ENCODE measurements at regions of chr9 and their contacts with region 1.

Region 1: DNA sequence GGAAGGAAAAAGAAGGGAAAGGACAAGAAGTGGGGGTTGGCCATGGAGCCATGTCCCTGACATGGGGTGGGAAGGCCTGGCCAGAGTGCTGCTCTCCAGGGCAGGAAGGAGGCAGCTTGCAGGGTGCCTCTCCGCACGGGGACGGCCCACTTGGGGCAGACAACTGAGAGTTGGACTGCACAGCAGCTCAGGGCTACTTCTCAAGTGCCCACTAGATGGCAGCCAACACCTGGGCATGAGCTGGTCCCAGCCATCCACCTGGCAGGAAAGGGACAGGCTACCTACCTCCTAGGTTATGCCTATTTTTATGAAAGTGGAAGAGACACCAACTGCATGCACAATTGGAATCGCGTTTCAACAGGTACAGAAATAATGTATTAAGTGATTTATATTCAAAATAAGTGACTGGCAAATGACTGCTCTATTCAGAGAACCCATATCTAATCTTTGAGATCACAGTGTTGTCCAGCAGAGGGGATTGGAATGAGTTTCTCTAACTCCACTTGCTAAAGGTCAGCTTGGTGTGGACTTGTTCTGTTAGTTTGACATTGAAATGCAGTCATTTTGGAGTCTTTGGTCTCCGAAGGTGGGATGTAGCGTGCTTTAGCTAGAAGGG is 113.4 kb downstream of the SYK start:
- DNase-seq: peak; percentile 33
- ATAC-seq: peak; percentile 99
- H3K4me3 ChIP-seq: no peak overlapping the region
- H3K27ac ChIP-seq: no peak overlapping the region
- H3K4me1 ChIP-seq: no peaks in the 10 kb centered on the region; the same call in 1 of the 2 replicates
- H3K27me3 ChIP-seq: no peaks in the 10 kb centered on the region; a peak in 1 of 4 replicates
- CTCF ChIP-seq: peak; percentile 81 to 92 (median 90)
- EP300 ChIP-seq: no peak
- POLR2A ChIP-seq: no peak
- RAD21 ChIP-seq: peak; percentile 93

Region 2: DNA sequence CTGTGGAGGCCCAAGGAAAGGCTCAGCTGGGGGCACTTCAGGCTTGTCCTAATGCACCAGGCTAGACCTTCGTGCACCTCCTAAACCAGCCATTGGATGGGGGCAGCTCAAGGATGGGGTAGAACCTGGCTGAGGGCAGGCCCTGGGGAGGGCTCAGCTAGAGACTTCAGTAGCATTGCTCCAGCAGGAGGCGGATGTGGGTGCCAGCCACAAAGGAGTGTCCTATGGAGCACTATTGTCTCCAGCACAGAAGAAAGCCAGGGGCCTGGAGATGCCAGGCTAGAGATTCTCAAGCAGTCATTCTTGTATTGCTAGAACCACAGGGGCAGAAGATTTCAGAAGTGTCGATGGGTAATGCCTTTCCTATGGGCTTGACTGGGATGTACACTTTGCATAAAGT is 18.5 kb after region 1 on chr9:
- CTCF ChIA-PET with region 1: interaction called, 11 read pairs
- POLR2A ChIA-PET with region 1: no interaction called
- RAD21 ChIA-PET with region 1: no interaction called
- SMC1A ChIA-PET with region 1: no interaction called
- in situ Hi-C with region 1: no loop called
- intact Hi-C with region 1: no loop called
- DNase-seq: no peak
- ATAC-seq: no peak
- H3K4me3 ChIP-seq: no peak overlapping the region
- H3K27ac ChIP-seq: no peak overlapping the region
- H3K4me1 ChIP-seq: no peaks in the 10 kb centered on the region; the same call in none of the 2 replicates
- H3K27me3 ChIP-seq: peaks cover 0 to 8% of the 10 kb centered on the region in 2 experiments; a peak in 3 of 4 replicates
- CTCF ChIP-seq: no peak
- EP300 ChIP-seq: no peak
- POLR2A ChIP-seq: no peak
- RAD21 ChIP-seq: no peak

Region 3: DNA sequence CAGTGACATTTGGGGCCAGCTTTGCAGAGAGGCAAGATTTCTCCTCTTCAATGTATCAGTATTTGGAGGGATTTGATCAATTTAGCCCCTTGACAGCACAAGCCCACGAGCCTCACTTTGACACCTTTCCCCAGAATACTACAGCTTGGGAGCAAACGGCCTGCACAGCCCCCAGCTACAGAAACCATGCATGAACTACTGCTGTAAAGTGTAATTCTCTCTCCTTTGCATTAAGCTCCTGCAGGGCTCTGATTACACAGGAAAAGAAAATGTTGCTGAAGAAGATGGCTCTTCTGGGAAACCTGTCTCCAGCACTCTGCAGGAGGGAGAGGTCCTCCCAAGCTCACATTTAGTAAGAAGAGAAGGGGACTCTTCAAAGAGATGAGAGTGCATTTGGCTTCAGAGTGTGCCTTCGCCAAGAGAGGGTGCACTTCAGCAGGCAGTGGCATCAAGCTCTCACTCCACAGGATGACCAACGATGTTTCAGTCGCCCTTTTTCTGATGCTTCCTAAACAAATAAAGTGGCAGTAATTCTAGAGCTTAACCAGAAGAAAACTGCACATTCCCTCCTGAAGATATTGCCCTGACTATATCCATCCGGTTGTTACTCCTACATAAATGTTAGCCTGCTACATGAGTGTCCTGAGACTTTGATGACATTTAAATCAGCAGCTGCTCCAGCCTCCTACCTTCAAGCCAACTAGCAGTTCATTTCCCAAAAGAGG is 174.6 kb after region 1 on chr9:
- CTCF ChIA-PET with region 1: interaction called, 4 read pairs
- POLR2A ChIA-PET with region 1: no interaction called
- RAD21 ChIA-PET with region 1: no interaction called
- SMC1A ChIA-PET with region 1: interaction called, 3 read pairs
- in situ Hi-C with region 1: no loop called
- intact Hi-C with region 1: loop called (anchors 10 kb)
- DNase-seq: no peak
- ATAC-seq: peak; percentile 64
- H3K4me3 ChIP-seq: no peak overlapping the region
- H3K27ac ChIP-seq: no peak overlapping the region
- H3K4me1 ChIP-seq: no peaks in the 10 kb centered on the region
- H3K27me3 ChIP-seq: peaks cover 0 to 1% of the 10 kb centered on the region in 2 experiments; a peak in 3 of 4 replicates
- CTCF ChIP-seq: peak; percentile 24 to 54 (median 51); a peak in 4 of 6 replicates
- EP300 ChIP-seq: no peak
- POLR2A ChIP-seq: no peak
- RAD21 ChIP-seq: peak; percentile 82

Region 4: GRCh38 chr9:91422758-91423711 is 508.1 kb after region 1 on chr9:
- CTCF ChIA-PET with region 1: interaction called, 115 read pairs
- POLR2A ChIA-PET with region 1: no interaction called
- RAD21 ChIA-PET with region 1: interaction called, 59 read pairs
- SMC1A ChIA-PET with region 1: interaction called, 47 read pairs
- in situ Hi-C with region 1: loop called (anchors 5 kb)
- intact Hi-C with region 1: loop called (anchors 1 kb)
- DNase-seq: no peak
- ATAC-seq: peak; percentile 52
- H3K4me3 ChIP-seq: peak overlapping the region; percentile 92
- H3K27ac ChIP-seq: no peak overlapping the region
- H3K4me1 ChIP-seq: peaks cover 6% of the 10 kb centered on the region
- H3K27me3 ChIP-seq: peaks cover 12 to 24% of the 10 kb centered on the region in 2 experiments
- CTCF ChIP-seq: peak; percentile 21 to 43 (median 27); a peak in 4 of 6 replicates
- EP300 ChIP-seq: no peak
- POLR2A ChIP-seq: 0 out of 2 replicates have a peak, but pooled peaks have one; percentile 1
- RAD21 ChIP-seq: no peak

Region 5: DNA sequence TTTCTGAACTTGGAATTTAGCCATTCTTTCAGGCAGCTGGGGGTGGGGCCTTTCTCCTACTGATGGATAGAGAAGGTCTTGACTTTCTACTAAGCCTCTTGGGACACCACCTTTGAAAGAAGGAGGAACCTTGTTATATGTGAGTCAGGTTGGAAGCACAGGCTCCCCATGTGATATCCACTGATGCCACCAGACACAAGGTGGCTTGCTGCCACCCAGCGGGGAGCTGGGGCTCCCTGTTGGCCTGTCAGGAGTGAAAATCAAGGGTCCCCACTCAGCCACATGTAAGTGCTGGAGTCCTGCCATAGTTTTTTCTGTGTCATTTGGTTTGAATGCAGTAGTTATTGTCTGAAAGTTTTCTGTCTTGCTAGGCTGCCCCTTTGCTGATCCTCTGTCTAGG is 761.1 kb after region 1 on chr9:
- CTCF ChIA-PET with region 1: interaction called, 14 read pairs
- POLR2A ChIA-PET with region 1: no interaction called
- RAD21 ChIA-PET with region 1: interaction called, 7 read pairs
- SMC1A ChIA-PET with region 1: interaction called, 3 read pairs
- in situ Hi-C with region 1: loop called (anchors 5 kb)
- intact Hi-C with region 1: loop called (anchors 1 kb)
- DNase-seq: peak; percentile 3
- ATAC-seq: peak; percentile 80
- H3K4me3 ChIP-seq: no peak overlapping the region
- H3K27ac ChIP-seq: no peak overlapping the region
- H3K4me1 ChIP-seq: no peaks in the 10 kb centered on the region
- H3K27me3 ChIP-seq: no peaks in the 10 kb centered on the region
- CTCF ChIP-seq: peak; percentile 43 to 61 (median 57); a peak in 5 of 6 replicates
- EP300 ChIP-seq: no peak
- POLR2A ChIP-seq: no peak
- RAD21 ChIP-seq: peak; percentile 58

Region 6: DNA sequence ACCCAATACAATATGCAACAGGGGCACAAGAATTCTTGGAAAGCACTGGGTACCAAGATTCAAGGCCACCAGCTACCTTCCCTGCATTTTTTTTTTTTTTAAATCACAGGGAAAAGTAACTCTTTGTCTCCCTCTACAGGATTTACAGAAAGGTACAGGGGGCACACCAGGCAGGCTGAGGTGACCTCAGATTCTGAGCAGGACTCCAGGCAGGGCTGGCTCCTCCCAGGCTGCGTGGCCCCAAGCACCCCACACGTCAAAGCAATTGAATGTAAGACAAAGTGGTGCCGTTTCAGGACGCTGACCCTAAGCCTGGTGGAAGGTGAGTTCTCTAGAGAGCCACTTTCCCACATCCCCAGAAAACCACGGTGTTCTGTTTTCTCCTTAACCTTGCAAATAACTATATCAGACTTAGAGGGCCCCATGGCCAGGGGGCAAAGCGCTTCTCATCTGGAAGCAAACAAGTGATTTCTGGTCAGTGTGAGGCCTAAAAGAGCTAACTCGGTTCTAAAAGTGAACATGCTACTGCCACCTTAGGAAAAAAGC is 812.4 kb after region 1 on chr9:
- CTCF ChIA-PET with region 1: interaction called, 30 read pairs
- POLR2A ChIA-PET with region 1: no interaction called
- RAD21 ChIA-PET with region 1: interaction called, 15 read pairs
- SMC1A ChIA-PET with region 1: interaction called, 5 read pairs
- in situ Hi-C with region 1: loop called (anchors 5 kb)
- intact Hi-C with region 1: loop called (anchors 1 kb)
- DNase-seq: no peak
- ATAC-seq: peak; percentile 97
- H3K4me3 ChIP-seq: no peak overlapping the region
- H3K27ac ChIP-seq: no peak overlapping the region
- H3K4me1 ChIP-seq: no peaks in the 10 kb centered on the region
- H3K27me3 ChIP-seq: no peaks in the 10 kb centered on the region; a peak in 1 of 4 replicates
- CTCF ChIP-seq: peak; percentile 63 to 77 (median 71)
- EP300 ChIP-seq: no peak
- POLR2A ChIP-seq: no peak
- RAD21 ChIP-seq: peak; percentile 83

Region 7: GRCh38 chr9:91740701-91741100 is 825.7 kb after region 1 on chr9:
- CTCF ChIA-PET with region 1: no interaction called
- POLR2A ChIA-PET with region 1: no interaction called
- RAD21 ChIA-PET with region 1: no interaction called
- SMC1A ChIA-PET with region 1: no interaction called
- in situ Hi-C with region 1: no loop called
- intact Hi-C with region 1: no loop called
- DNase-seq: no peak
- ATAC-seq: no peak
- H3K4me3 ChIP-seq: no peak overlapping the region
- H3K27ac ChIP-seq: no peak overlapping the region
- H3K4me1 ChIP-seq: no peaks in the 10 kb centered on the region
- H3K27me3 ChIP-seq: peaks cover 0 to 3% of the 10 kb centered on the region in 2 experiments; a peak in 2 of 4 replicates
- CTCF ChIP-seq: 0 out of 6 replicates have a peak, but pooled peaks of 1 of the 3 experiments have one; percentile 4
- EP300 ChIP-seq: no peak
- POLR2A ChIP-seq: no peak
- RAD21 ChIP-seq: no peak

Measured in GM12878 (cell line).